Psoas muscle (tissue), 8 donors: ENCODE measurements at regions of chr14 and their contacts with region 1.

Region 1: DNA sequence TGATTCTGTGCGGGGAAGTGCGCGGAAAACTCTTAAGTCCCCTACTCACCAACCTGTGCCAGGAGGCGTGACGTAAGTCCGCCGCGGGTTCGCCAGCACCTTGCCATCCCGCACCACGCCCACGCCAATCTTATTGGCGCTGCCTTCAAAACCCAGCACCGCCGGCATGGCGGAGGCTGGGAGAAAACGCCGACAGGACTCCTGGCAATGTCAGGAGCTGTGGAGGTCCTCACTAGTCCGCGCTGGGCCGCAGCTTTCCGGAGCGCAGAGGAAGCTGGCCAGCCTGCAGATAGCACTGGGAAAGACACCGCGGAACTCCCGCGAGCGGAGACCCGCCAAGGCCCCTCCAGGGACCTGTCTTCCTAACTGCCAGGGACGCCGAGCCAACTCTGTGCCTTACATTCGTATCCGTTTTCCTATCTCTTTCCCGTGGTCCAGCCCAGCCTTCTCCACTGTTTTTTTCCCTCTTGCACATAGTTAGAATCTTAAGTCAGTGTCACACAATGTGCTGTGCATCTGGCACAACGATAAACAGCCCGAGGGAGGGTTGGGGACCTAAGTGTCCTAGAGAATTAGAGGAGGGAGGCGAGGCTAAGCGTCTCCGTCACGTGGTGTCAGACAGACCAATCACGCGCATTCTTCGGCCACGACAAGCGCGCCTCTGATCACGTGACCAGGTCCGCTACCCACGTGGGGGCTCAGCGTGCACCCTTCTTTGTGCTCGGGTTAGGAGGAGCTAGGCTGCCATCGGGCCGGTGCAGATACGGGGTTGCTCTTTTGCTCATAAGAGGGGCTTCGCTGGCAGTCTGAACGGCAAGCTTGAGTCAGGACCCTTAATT is at the starts of genes APEX1 and OSGEP:
- DNase-seq: peak; percentile 98 to 99
- ATAC-seq: peak; percentile 93 to 95 (median 94)
- H3K4me3 ChIP-seq: peak within 1 kb of the TSS; percentile 68
- H3K27ac ChIP-seq: peak within 1 kb of the TSS; percentile 92
- H3K4me1 ChIP-seq: peaks cover 32% of the 10 kb centered on the region
- H3K27me3 ChIP-seq: no peaks in the 10 kb centered on the region
- CTCF ChIP-seq: no peak
- total RNA-seq, gene APEX1: 61.1 to 98.4 (median 85.8) TPM
- total RNA-seq, gene OSGEP: 17.2 to 24.4 (median 18.6) TPM

Region 2: DNA sequence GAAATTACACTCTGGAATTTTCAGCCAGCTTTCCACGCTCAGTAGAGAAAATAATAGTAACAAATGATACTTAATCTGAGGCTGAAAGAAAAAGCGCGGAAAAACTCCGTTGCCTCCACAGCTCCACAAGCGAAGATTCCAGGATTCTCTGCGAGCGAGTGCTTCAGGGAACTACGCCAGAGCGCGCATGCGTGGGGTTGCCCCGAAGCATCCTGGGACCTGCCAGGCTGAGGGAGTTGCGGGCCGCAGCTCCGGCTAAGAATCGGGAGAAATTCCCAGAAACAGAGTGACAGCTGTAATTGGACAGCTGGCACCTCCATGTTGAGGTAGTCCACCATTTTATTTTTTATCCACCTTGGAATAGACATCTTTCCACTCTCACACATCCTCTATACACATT is 137.0 kb before region 1 on chr14:
- intact Hi-C with region 1: no loop called
- DNase-seq: no peak
- ATAC-seq: no peak
- H3K4me3 ChIP-seq: no peak overlapping the region
- H3K27ac ChIP-seq: no peak overlapping the region
- H3K4me1 ChIP-seq: no peaks in the 10 kb centered on the region
- H3K27me3 ChIP-seq: no peaks in the 10 kb centered on the region
- CTCF ChIP-seq: no peak

Region 3: GRCh38 chr14:20343092-20343861 is 111.5 kb before region 1 on chr14 and contains the start of gene PARP2:
- intact Hi-C with region 1: loop called in 1 of 2 experiments (anchors 2 kb)
- DNase-seq: peak; percentile 97 to 99
- ATAC-seq: peak; percentile 96 to 97 (median 97)
- H3K4me3 ChIP-seq: peak within 1 kb of the TSS; percentile 90
- H3K27ac ChIP-seq: peak within 1 kb of the TSS; percentile 93
- H3K4me1 ChIP-seq: peaks cover 4% of the 10 kb centered on the region
- H3K27me3 ChIP-seq: no peaks in the 10 kb centered on the region
- CTCF ChIP-seq: peak; percentile 8
- total RNA-seq, gene PARP2: 10.2 to 17.4 (median 14.7) TPM

Region 4: GRCh38 chr14:20413045-20413799 is 41.5 kb before region 1 on chr14 and contains the start of gene TEP1:
- intact Hi-C with region 1: loop called (anchors 2 kb)
- DNase-seq: peak; percentile 91 to 94
- ATAC-seq: peak; percentile 89 to 95 (median 92)
- H3K4me3 ChIP-seq: peak within 1 kb of the TSS; percentile 92
- H3K27ac ChIP-seq: peak within 1 kb of the TSS; percentile 100
- H3K4me1 ChIP-seq: peaks cover 31% of the 10 kb centered on the region
- H3K27me3 ChIP-seq: no peaks in the 10 kb centered on the region
- CTCF ChIP-seq: no peak
- total RNA-seq, gene TEP1: 14.7 to 44.8 (median 21.2) TPM

Region 5: DNA sequence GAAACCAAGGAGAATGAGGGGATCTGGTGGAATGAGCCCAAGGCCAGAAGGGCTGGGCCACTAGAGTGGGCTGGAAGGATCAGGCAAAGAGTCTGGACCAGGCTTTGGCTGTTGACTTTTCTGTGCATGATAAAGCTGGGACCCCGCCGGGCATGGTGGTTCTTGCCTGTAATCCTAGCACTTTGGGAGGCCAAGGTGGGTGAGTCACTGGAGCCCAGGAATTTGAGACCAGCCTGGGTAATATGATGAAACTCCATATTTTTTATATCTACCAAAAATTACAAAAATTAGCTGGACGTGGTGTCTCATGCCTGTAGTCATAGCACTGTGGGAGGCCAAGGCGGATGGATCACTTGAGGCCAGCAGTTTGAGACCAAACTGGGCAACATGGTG is 18.4 kb before region 1 on chr14:
- intact Hi-C with region 1: loop called in 1 of 2 experiments (anchors 2 kb)
- DNase-seq: peak in 1 of 2 donors; percentile 29
- ATAC-seq: peak in 1 of 4 donors; percentile 5
- H3K4me3 ChIP-seq: peak overlapping the region; percentile 67
- H3K27ac ChIP-seq: peak overlapping the region; percentile 95
- H3K4me1 ChIP-seq: peaks cover 36% of the 10 kb centered on the region
- H3K27me3 ChIP-seq: no peaks in the 10 kb centered on the region
- CTCF ChIP-seq: no peak